ENCODE measurements at regions of chr5 and their contacts with region 1.

Region 1: GRCh38 chr5:137498736-137499505 is at the start of gene SPOCK1:
- DNase-seq: peak; percentile 57
- H3K4me3 ChIP-seq: peak within 1 kb of the TSS; percentile 48 to 58 (median 53)
- H3K27ac ChIP-seq: no peak within 1 kb of the TSS
- H3K4me1 ChIP-seq: peaks cover 10% of the 10 kb centered on the region
- H3K27me3 ChIP-seq: peaks cover 4% of the 10 kb centered on the region
- CTCF ChIP-seq: peak; percentile 54 to 58
- total RNA-seq, gene SPOCK1: 13.3 to 14.9 TPM

Region 2: GRCh38 chr5:136802383-136802782 is 696.5 kb before region 1 on chr5:
- CTCF ChIA-PET with region 1: no interaction called
- dilution Hi-C with region 1: no loop called
- in situ Hi-C with region 1: loop called (anchors 25 kb)
- intact Hi-C with region 1: loop called (anchors 1 kb)
- DNase-seq: peak; percentile 14
- H3K4me3 ChIP-seq: no peak overlapping the region
- H3K27ac ChIP-seq: no peak overlapping the region
- H3K4me1 ChIP-seq: peaks cover 7% of the 10 kb centered on the region
- H3K27me3 ChIP-seq: no peaks in the 10 kb centered on the region
- CTCF ChIP-seq: peak; percentile 10 to 54

Region 3: GRCh38 chr5:137075163-137075970 is 423.6 kb before region 1 on chr5:
- CTCF ChIA-PET with region 1: no interaction called
- dilution Hi-C with region 1: no loop called
- in situ Hi-C with region 1: no loop called
- intact Hi-C with region 1: loop called (anchors 2 kb)
- DNase-seq: peak; percentile 78
- H3K4me3 ChIP-seq: no peak overlapping the region
- H3K27ac ChIP-seq: peak overlapping the region; percentile 22
- H3K4me1 ChIP-seq: peaks cover 21% of the 10 kb centered on the region
- H3K27me3 ChIP-seq: no peaks in the 10 kb centered on the region
- CTCF ChIP-seq: peak; percentile 94

Region 4: GRCh38 chr5:137201876-137202275 is 297.0 kb before region 1 on chr5:
- CTCF ChIA-PET with region 1: no interaction called
- dilution Hi-C with region 1: no loop called
- in situ Hi-C with region 1: no loop called
- intact Hi-C with region 1: loop called (anchors 2 kb)
- DNase-seq: peak; percentile 76
- H3K4me3 ChIP-seq: no peak overlapping the region
- H3K27ac ChIP-seq: no peak overlapping the region
- H3K4me1 ChIP-seq: peaks cover 28% of the 10 kb centered on the region
- H3K27me3 ChIP-seq: no peaks in the 10 kb centered on the region
- CTCF ChIP-seq: peak; percentile 27 to 42

Region 5: DNA sequence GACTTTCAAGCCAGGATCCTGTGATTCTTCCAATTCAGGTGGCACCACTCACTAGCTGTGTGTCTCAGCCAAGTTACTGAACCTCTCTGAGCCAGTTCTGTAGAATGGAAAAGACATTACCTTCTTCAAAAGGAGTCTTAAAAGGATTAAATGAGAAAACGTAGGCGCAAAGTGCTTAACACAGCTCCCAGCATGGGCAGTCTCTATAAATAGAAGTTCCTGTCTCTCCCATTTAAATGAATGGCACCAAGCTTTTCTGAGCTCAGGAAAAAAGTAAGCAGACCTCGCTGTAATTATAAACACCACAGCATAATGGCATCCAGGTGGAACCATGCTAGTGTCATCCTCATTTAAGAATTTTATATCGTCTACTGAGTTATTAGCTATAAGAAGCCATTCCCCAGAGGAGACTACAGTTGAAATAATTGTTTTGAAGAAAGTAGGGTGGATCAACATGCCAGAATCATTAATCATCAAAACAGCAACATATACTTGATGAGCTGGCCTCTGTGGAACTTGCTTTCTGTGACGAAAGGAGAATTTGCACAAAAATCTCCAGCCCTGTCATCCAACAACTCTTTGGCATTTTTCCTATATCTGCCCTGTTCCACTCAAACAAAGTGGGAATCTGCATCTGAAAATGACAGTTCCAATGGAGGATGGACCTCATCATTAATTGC is 188.7 kb before region 1 on chr5:
- CTCF ChIA-PET with region 1: no interaction called
- dilution Hi-C with region 1: no loop called
- in situ Hi-C with region 1: loop called (anchors 10 kb)
- intact Hi-C with region 1: no loop called
- DNase-seq: peak; percentile 81
- H3K4me3 ChIP-seq: no peak overlapping the region
- H3K27ac ChIP-seq: peak overlapping the region; percentile 79
- H3K4me1 ChIP-seq: peaks cover 19% of the 10 kb centered on the region
- H3K27me3 ChIP-seq: no peaks in the 10 kb centered on the region
- CTCF ChIP-seq: no peak

Region 6: DNA sequence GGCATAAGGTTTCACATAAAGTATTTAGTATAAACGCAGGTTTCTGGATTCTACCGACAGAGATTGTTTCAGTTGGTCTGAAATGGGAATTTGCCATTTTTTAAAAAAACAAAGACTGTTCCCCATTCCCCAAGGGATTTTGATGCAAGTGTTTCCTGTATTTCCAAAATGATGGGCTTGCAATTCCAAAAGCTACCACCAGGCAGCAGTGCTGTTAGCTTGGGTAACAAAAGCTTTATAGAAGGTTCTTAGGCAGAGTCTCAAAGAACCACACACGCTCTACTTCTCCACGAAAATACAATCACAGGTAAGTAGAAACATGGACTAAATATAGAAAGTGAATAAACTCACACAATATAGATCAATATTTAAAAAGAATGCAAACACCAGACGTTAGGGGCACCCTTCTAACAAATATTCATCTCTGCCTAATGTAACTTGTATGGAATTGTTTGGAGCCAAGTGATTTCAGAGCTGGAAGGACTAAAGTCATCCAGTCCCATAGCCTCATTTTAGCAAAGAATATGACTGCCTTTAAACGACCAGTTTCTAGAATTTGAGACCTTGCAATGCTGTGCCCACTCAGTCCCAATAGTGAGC is 154.1 kb before region 1 on chr5:
- CTCF ChIA-PET with region 1: no interaction called
- dilution Hi-C with region 1: no loop called
- in situ Hi-C with region 1: loop called (anchors 5 kb)
- intact Hi-C with region 1: loop called (anchors 1 kb)
- DNase-seq: peak; percentile 39
- H3K4me3 ChIP-seq: no peak overlapping the region
- H3K27ac ChIP-seq: no peak overlapping the region
- H3K4me1 ChIP-seq: peaks cover 14% of the 10 kb centered on the region
- H3K27me3 ChIP-seq: no peaks in the 10 kb centered on the region
- CTCF ChIP-seq: peak; percentile 98 to 100

Region 7: DNA sequence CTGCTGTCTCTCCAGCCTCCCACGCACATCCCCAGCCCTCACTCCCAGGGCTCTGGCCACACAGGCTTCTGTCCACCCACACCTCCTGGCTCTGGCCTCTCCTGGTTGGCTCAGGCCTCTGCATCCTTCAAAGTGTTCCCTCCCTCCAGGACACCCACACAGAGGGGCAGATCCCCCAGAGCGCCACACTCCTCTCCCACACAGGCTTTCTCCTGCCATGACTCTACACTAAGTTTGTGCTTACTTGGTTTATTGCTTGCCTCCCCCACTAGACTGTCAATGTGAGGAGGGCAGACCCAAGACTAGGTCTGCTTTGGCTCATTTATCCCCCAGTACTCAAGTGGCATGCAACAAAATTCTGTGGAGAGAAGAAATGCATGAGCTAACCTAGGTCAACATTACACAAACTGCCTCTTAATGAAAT is 67.2 kb after region 1 on chr5:
- CTCF ChIA-PET with region 1: no interaction called
- dilution Hi-C with region 1: no loop called
- in situ Hi-C with region 1: no loop called
- intact Hi-C with region 1: no loop called
- DNase-seq: no peak
- H3K4me3 ChIP-seq: no peak overlapping the region
- H3K27ac ChIP-seq: no peak overlapping the region
- H3K4me1 ChIP-seq: peaks cover 49% of the 10 kb centered on the region
- H3K27me3 ChIP-seq: no peaks in the 10 kb centered on the region
- CTCF ChIP-seq: no peak

Measured in mammary epithelial cell (primary cell).